Naive thymus-derived CD4-positive, alpha-beta T cell (primary cell): ENCODE measurements at regions of chr3 and their contacts with region 1.

Region 1: DNA sequence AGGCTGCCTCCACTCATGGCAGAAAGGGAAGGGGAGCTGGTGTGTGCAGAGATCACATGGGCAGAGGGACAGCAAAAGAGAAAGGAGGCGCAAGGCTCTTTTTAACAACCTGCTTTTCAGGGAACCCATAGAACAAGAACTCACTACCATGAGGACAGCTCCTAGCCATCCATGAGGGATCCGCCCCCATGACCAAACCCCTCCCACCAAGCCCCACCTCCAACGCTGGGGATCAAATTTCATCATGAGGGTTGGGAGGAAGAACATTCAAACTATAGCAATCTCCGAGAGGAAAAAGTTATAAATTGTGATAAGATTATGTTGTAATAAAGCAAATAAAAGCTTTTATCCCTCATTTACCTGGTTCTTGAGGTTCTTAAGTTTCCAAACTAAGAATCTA is 84.7 kb upstream of the LMCD1 start:
- DNase-seq: no peak
- ATAC-seq: peak; percentile 28
- H3K4me3 ChIP-seq: no peak overlapping the region
- H3K4me3 Mint-ChIP-seq: no peak overlapping the region
- H3K27ac ChIP-seq: no peak overlapping the region
- H3K27ac Mint-ChIP-seq: peak overlapping the region in 3 of 9 donors; percentile 45 to 67 (median 57)
- H3K4me1 ChIP-seq: peaks cover 0 to 7% of the 10 kb centered on the region in 2 donors
- H3K4me1 Mint-ChIP-seq: peaks cover 0 to 14% (median 8%) of the 10 kb centered on the region in 7 donors
- H3K27me3 ChIP-seq: no peaks in the 10 kb centered on the region
- H3K27me3 Mint-ChIP-seq: no peaks in the 10 kb centered on the region

Region 2: GRCh38 chr3:7285505-7285904 is 1131.5 kb before region 1 on chr3:
- CTCF ChIA-PET with region 1: no interaction called
- POLR2A ChIA-PET with region 1: no interaction called
- intact Hi-C with region 1: loop called in 1 of 2 experiments (anchors 5 kb)
- DNase-seq: no peak
- ATAC-seq: peak; percentile 18
- H3K4me3 ChIP-seq: no peak overlapping the region
- H3K4me3 Mint-ChIP-seq: no peak overlapping the region
- H3K27ac ChIP-seq: no peak overlapping the region
- H3K27ac Mint-ChIP-seq: no peak overlapping the region
- H3K4me1 ChIP-seq: no peaks in the 10 kb centered on the region
- H3K4me1 Mint-ChIP-seq: peaks cover 0 to 3% (median 0%) of the 10 kb centered on the region in 7 donors
- H3K27me3 ChIP-seq: no peaks in the 10 kb centered on the region
- H3K27me3 Mint-ChIP-seq: peaks cover 0 to 5% (median 0%) of the 10 kb centered on the region in 5 donors

Region 3: DNA sequence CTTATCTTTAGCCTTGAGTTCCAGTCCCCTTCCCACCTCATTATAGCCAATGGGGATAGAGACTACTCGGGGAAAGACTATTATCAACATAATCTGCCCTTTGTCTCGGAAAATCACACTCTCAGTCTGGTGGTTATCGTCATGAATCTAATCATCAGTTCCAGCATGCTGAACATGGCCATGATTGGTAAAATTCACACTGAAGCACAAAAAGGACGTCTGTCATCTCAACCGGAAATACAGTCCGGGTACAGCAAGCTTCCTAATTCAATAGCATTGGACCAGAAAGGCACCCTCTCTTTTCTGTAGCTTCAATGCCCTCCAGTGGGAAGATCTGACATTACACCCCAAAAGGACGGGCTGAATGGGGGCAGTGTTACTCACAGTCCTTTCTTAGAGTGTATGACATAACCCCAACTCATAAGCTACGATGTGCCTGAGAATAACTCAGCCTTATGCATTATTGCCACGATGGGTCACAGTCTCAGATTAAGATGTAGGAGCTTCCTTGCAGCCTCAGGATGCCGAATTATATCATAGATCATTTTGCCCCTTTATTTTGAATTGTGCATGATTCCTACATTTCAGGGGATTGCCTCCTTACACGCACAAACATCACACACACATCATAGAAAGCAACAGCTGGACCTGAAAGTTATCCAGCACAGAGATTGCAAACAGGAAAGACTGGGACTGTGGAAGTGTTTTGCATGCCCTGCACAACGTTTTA is 305.7 kb before region 1 on chr3:
- CTCF ChIA-PET with region 1: no interaction called
- POLR2A ChIA-PET with region 1: no interaction called
- intact Hi-C with region 1: loop called in 1 of 2 experiments (anchors 1 kb)
- DNase-seq: peak in 8 of 9 donors; percentile 29 to 68 (median 55)
- ATAC-seq: peak; percentile 84
- H3K4me3 ChIP-seq: no peak overlapping the region
- H3K4me3 Mint-ChIP-seq: peak overlapping the region in 8 of 10 donors; percentile 39 to 76 (median 54)
- H3K27ac ChIP-seq: no peak overlapping the region
- H3K27ac Mint-ChIP-seq: no peak overlapping the region
- H3K4me1 ChIP-seq: peaks cover 0 to 5% of the 10 kb centered on the region in 2 donors
- H3K4me1 Mint-ChIP-seq: peaks cover 0 to 7% (median 4%) of the 10 kb centered on the region in 7 donors
- H3K27me3 ChIP-seq: no peaks in the 10 kb centered on the region
- H3K27me3 Mint-ChIP-seq: peaks cover 0 to 10% (median 6%) of the 10 kb centered on the region in 5 donors

Region 4: DNA sequence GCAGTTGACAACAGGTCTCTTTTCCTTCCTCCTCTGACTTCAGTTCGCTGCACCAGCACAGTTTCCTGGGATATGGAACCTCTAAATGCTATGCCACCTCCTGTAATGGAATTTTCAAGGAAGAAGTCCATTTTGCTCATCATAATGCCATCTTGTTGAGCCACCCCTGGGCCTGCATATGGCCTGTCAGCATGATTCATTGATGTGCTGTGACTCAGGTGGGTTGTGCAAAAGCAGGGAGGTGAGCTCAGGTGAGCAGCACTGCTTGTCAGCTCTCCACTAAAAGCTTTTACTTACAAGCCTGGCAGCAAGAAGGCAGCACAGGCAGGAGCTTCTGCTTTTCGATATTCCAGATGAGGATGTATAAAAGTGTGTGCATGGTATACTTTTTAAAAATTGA is 162.5 kb before region 1 on chr3:
- CTCF ChIA-PET with region 1: no interaction called
- POLR2A ChIA-PET with region 1: no interaction called
- intact Hi-C with region 1: no loop called
- DNase-seq: no peak
- ATAC-seq: no peak
- H3K4me3 ChIP-seq: no peak overlapping the region
- H3K4me3 Mint-ChIP-seq: no peak overlapping the region
- H3K27ac ChIP-seq: no peak overlapping the region
- H3K27ac Mint-ChIP-seq: no peak overlapping the region
- H3K4me1 ChIP-seq: no peaks in the 10 kb centered on the region
- H3K4me1 Mint-ChIP-seq: no peaks in the 10 kb centered on the region
- H3K27me3 ChIP-seq: no peaks in the 10 kb centered on the region
- H3K27me3 Mint-ChIP-seq: peaks cover 0 to 22% (median 17%) of the 10 kb centered on the region in 5 donors

Region 5: DNA sequence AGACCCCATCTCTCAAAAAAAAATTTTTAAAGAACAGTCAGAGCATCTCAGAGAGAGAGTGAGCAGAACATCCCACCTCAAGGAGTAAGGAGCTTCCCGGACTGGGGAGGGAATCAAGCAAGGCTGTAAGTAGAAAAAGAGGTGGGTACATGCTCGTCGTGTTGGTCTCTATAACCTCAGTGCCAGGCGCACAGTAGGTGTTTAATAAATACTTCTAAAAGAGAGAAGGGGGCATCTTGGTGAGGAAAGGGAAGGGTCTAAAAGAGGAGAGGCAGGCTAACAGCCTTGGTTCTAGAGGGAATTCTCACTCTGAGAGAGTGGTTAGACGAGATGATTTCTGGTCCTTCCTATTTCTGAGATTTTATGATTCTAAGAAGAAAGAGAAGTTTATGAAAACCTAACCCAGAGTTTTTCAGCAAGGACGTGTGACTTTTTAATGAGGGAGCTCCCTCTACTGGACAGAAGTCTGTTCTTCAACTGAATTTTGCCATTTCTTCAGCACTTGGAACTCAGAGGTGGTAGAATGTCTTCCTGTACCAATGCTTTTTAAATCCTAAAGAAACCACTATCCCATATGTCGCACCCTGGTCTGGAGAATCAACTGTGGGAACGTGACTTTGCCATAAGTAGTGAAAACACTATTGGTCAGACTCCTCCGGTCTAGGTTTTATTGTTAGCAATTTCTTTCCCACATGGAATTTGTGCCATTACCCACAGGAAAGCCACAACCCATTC is 115.1 kb before region 1 on chr3:
- CTCF ChIA-PET with region 1: interaction called, 14 read pairs
- POLR2A ChIA-PET with region 1: no interaction called
- intact Hi-C with region 1: loop called in 1 of 2 experiments (anchors 1 kb)
- DNase-seq: peak in 7 of 9 donors; percentile 16 to 56 (median 44)
- ATAC-seq: peak; percentile 50
- H3K4me3 ChIP-seq: no peak overlapping the region
- H3K4me3 Mint-ChIP-seq: no peak overlapping the region
- H3K27ac ChIP-seq: no peak overlapping the region
- H3K27ac Mint-ChIP-seq: peak overlapping the region in 5 of 9 donors; percentile 10 to 63 (median 37)
- H3K4me1 ChIP-seq: no peaks in the 10 kb centered on the region
- H3K4me1 Mint-ChIP-seq: peaks cover 0 to 15% (median 7%) of the 10 kb centered on the region in 7 donors
- H3K27me3 ChIP-seq: no peaks in the 10 kb centered on the region
- H3K27me3 Mint-ChIP-seq: peaks cover 0 to 4% (median 0%) of the 10 kb centered on the region in 5 donors

Region 6: DNA sequence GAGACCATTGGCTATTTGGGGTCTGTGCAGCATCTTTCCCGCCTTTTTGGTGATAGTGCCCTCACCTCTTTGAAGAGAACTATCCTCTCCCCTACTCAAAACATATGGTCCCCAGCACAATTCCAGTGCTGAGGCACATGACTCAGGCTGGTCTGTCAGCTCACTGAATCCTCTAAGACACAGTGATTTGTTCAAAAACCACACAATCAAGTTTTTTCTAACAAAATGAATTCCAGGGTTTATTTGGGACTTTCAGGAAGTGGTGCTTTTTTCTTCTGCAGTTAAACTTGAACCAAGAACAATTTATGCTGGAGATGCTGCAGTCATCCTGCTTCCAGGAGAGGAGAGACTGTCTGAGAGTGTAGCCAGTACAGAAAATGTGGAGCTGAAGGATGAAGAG is 57.8 kb before region 1 on chr3:
- CTCF ChIA-PET with region 1: interaction called, 9 read pairs
- POLR2A ChIA-PET with region 1: interaction called, 4 read pairs
- intact Hi-C with region 1: loop called in 1 of 2 experiments (anchors 1 kb)
- DNase-seq: no peak
- ATAC-seq: no peak
- H3K4me3 ChIP-seq: no peak overlapping the region
- H3K4me3 Mint-ChIP-seq: peak overlapping the region in 4 of 10 donors; percentile 17 to 70 (median 35)
- H3K27ac ChIP-seq: no peak overlapping the region
- H3K27ac Mint-ChIP-seq: peak overlapping the region; percentile 19 to 81 (median 71)
- H3K4me1 ChIP-seq: peaks cover 32 to 35% of the 10 kb centered on the region in 2 donors
- H3K4me1 Mint-ChIP-seq: peaks cover 24 to 64% (median 58%) of the 10 kb centered on the region in 7 donors
- H3K27me3 ChIP-seq: no peaks in the 10 kb centered on the region
- H3K27me3 Mint-ChIP-seq: peaks cover 0 to 6% (median 0%) of the 10 kb centered on the region in 5 donors